K562 (cell line): ENCODE measurements at regions of chrX and their contacts with region 1.

Region 1: GRCh38 chrX:46758906-46759644 is at the start of gene SLC9A7:
- DNase-seq: peak; percentile 46 to 68 (median 50)
- ATAC-seq: peak; percentile 97
- H3K4me3 ChIP-seq: peak within 1 kb of the TSS; percentile 26; the same call in 1 of the 2 replicates
- H3K27ac ChIP-seq: no peak within 1 kb of the TSS
- H3K4me1 ChIP-seq: peaks cover 0 to 12% of the 10 kb centered on the region in 2 experiments; a peak in 2 of 5 replicates
- H3K27me3 ChIP-seq: peaks cover 0 to 8% of the 10 kb centered on the region in 2 experiments; a peak in 2 of 5 replicates
- CTCF ChIP-seq: peak; percentile 63 to 81 (median 67); a peak in 5 of 6 replicates
- EP300 ChIP-seq: no peak
- POLR2A ChIP-seq: no peak
- RAD21 ChIP-seq: peak; percentile 74 to 77
- polyA plus RNA-seq, gene SLC9A7: not detected

Region 2: DNA sequence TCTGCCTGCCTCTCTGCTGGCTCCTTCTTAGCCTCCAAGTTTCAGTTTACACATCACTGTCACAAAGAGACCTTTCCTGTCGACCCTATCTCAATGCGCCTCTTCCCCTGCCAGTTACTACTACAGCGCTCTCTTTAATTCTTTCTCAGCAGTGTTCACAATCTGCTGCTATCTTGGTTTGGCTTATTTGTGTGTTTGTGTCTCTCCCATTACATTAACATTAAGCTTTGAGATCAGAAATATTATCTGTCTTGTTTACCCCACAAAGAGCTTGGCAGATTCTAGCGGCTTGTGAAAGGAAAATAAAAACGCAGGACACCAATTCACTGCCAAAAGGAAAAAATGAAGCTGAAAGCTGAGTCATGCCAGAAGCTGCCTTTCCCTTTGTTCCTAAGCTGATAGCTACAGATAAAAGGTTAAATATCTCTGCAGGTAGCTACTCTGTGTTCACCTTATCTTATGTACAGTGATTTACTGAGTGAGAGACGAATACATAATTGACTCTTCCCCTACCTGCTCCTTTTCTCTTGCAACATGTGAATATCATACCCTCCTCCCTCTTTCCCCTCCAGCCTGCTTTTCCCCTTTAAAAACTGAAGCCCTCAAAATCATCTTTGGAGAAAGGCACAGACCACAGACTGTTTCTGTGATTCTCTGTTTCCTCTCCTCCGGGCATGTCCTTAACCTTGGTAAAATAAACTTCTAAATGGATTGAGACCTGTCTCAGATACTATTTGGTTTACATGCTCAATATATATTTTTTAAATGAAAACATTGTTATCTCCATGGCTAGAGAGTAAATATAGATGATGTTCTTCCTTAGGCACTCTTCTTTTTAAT is 19.1 kb after region 1 on chrX:
- CTCF ChIA-PET with region 1: no interaction called
- POLR2A ChIA-PET with region 1: no interaction called
- in situ Hi-C with region 1: no loop called
- intact Hi-C with region 1: no loop called
- DNase-seq: no peak
- ATAC-seq: no peak
- H3K4me3 ChIP-seq: no peak overlapping the region
- H3K27ac ChIP-seq: no peak overlapping the region
- H3K4me1 ChIP-seq: no peaks in the 10 kb centered on the region
- H3K27me3 ChIP-seq: peaks cover 4 to 11% of the 10 kb centered on the region in 2 experiments; a peak in 4 of 5 replicates
- CTCF ChIP-seq: no peak
- EP300 ChIP-seq: no peak
- POLR2A ChIP-seq: no peak
- RAD21 ChIP-seq: no peak

Region 3: DNA sequence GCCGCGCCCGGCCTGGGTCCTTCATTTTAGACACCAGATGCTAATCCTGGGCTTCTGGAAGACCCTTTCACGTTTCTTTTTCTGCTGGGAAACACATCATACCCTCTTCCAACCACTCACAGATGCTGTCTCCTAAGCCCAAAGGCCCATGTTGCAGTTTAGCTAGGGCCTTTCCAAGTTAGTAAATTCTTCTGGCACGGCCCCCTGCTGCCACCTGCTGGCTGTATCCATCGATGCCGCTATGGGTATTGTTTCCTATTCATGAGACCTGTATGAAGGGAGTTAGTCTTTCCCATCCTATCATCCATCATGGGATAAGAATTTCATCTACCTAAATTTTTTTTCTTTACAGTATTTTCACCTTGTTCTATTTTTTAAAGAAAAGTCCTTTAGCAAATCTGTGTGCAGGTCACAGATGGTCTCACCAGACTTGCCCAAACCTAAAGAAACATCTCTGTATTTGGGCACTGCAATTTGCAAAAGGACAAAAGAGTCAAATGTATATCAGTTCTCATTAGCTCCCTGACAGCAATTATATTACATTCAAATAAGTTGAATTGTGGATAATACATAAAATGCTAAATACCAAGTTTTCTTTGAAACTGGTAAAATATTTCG is 37.6 kb after region 1 on chrX:
- CTCF ChIA-PET with region 1: no interaction called
- POLR2A ChIA-PET with region 1: no interaction called
- in situ Hi-C with region 1: no loop called
- intact Hi-C with region 1: loop called (anchors 1 kb)
- DNase-seq: peak; percentile 43 to 60 (median 56)
- ATAC-seq: peak; percentile 86
- H3K4me3 ChIP-seq: no peak overlapping the region
- H3K27ac ChIP-seq: no peak overlapping the region
- H3K4me1 ChIP-seq: no peaks in the 10 kb centered on the region
- H3K27me3 ChIP-seq: no peaks in the 10 kb centered on the region
- CTCF ChIP-seq: peak; percentile 68 to 73 (median 72)
- EP300 ChIP-seq: no peak
- POLR2A ChIP-seq: no peak
- RAD21 ChIP-seq: peak; percentile 35 to 66; a peak in 3 of 4 replicates

Region 4: DNA sequence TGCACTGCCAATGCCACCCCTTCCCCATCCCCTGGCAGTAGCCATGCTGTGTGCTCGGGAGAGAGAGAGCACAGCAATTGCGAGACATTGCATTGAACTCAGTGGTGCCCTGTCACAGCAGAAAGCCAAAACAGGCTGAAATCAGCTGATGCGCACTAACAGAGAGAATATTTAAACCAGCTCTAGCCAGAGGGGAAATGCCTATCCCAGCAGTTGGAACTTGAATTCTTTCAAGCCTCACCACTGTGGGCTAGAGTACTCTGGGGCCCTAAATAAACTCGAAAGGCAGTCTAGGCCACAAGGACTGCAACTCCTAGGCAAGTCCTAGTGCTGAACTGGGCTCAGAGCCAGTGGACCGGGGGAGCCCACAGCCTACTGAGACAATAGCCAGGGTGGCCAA is 60.1 kb after region 1 on chrX:
- CTCF ChIA-PET with region 1: no interaction called
- POLR2A ChIA-PET with region 1: no interaction called
- in situ Hi-C with region 1: no loop called
- intact Hi-C with region 1: no loop called
- DNase-seq: no peak
- ATAC-seq: no peak
- H3K4me3 ChIP-seq: no peak overlapping the region
- H3K27ac ChIP-seq: no peak overlapping the region
- H3K4me1 ChIP-seq: no peaks in the 10 kb centered on the region
- H3K27me3 ChIP-seq: peaks cover 0 to 5% of the 10 kb centered on the region in 2 experiments; a peak in 1 of 5 replicates
- CTCF ChIP-seq: no peak
- EP300 ChIP-seq: no peak
- POLR2A ChIP-seq: no peak
- RAD21 ChIP-seq: no peak

Region 5: GRCh38 chrX:47030339-47030738 is 271.3 kb after region 1 on chrX:
- CTCF ChIA-PET with region 1: interaction called, 3 read pairs
- POLR2A ChIA-PET with region 1: no interaction called
- in situ Hi-C with region 1: no loop called
- intact Hi-C with region 1: loop called (anchors 1 kb)
- DNase-seq: peak; percentile 30 to 69 (median 37)
- ATAC-seq: peak; percentile 56; the same call in 2 of the 3 replicates
- H3K4me3 ChIP-seq: no peak overlapping the region
- H3K27ac ChIP-seq: no peak overlapping the region
- H3K4me1 ChIP-seq: no peaks in the 10 kb centered on the region
- H3K27me3 ChIP-seq: no peaks in the 10 kb centered on the region
- CTCF ChIP-seq: peak; percentile 40 to 65 (median 46); a peak in 4 of 6 replicates
- EP300 ChIP-seq: no peak
- POLR2A ChIP-seq: no peak
- RAD21 ChIP-seq: peak; percentile 43 to 74

Region 6: DNA sequence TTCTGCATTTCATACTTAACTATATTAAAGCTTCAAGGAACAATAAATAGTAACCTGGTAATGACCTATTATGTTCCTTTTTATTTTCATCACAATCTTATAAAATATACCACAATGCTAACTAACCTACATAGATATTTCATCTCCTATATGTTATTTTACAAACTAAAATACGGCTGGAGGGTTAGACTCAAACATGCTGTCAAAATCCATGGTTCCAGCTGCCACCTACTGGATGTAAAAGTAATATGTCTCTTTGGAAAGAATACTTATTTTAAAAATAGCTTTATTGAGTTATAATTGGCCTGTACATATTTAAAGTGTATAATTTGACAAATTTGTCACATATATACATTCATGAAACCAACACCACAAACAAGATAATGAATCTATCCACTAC is 334.2 kb after region 1 on chrX:
- CTCF ChIA-PET with region 1: interaction called, 5 read pairs
- POLR2A ChIA-PET with region 1: no interaction called
- in situ Hi-C with region 1: no loop called
- intact Hi-C with region 1: loop called (anchors 2 kb)
- DNase-seq: peak in 3 of 4 experiments; percentile 12 to 38 (median 20)
- ATAC-seq: peak; percentile 56; the same call in 2 of the 3 replicates
- H3K4me3 ChIP-seq: no peak overlapping the region
- H3K27ac ChIP-seq: no peak overlapping the region
- H3K4me1 ChIP-seq: no peaks in the 10 kb centered on the region
- H3K27me3 ChIP-seq: no peaks in the 10 kb centered on the region
- CTCF ChIP-seq: peak; percentile 28 to 67 (median 43); a peak in 4 of 6 replicates
- EP300 ChIP-seq: no peak
- POLR2A ChIP-seq: no peak
- RAD21 ChIP-seq: peak; percentile 67 to 76